CD4-positive, alpha-beta T cell (primary cell): ENCODE measurements at regions of chr12 and their contacts with region 1.

Region 1: GRCh38 chr12:121579981-121580868 is 598 bp downstream of the KDM2B start:
- DNase-seq: peak; percentile 64 to 89 (median 78)
- ATAC-seq: peak; percentile 64
- H3K4me3 ChIP-seq: peak overlapping the region; percentile 63
- H3K4me3 Mint-ChIP-seq: peak overlapping the region; percentile 98
- H3K27ac ChIP-seq: peak overlapping the region; percentile 62 to 79
- H3K27ac Mint-ChIP-seq: peak overlapping the region; percentile 98
- H3K4me1 ChIP-seq: peaks cover 52% of the 10 kb centered on the region
- H3K4me1 Mint-ChIP-seq: peaks cover 55% of the 10 kb centered on the region
- H3K27me3 ChIP-seq: no peaks in the 10 kb centered on the region
- H3K27me3 Mint-ChIP-seq: no peaks in the 10 kb centered on the region
- CTCF ChIP-seq: no peak

Region 2: GRCh38 chr12:121026274-121027045 is 553.8 kb before region 1 on chr12:
- CTCF ChIA-PET with region 1: no interaction called
- POLR2A ChIA-PET with region 1: no interaction called
- intact Hi-C with region 1: no loop called
- DNase-seq: no peak
- ATAC-seq: no peak
- H3K4me3 ChIP-seq: no peak overlapping the region
- H3K4me3 Mint-ChIP-seq: no peak overlapping the region
- H3K27ac ChIP-seq: no peak overlapping the region
- H3K27ac Mint-ChIP-seq: no peak overlapping the region
- H3K4me1 ChIP-seq: no peaks in the 10 kb centered on the region
- H3K4me1 Mint-ChIP-seq: no peaks in the 10 kb centered on the region
- H3K27me3 ChIP-seq: no peaks in the 10 kb centered on the region
- H3K27me3 Mint-ChIP-seq: no peaks in the 10 kb centered on the region
- CTCF ChIP-seq: no peak

Region 3: DNA sequence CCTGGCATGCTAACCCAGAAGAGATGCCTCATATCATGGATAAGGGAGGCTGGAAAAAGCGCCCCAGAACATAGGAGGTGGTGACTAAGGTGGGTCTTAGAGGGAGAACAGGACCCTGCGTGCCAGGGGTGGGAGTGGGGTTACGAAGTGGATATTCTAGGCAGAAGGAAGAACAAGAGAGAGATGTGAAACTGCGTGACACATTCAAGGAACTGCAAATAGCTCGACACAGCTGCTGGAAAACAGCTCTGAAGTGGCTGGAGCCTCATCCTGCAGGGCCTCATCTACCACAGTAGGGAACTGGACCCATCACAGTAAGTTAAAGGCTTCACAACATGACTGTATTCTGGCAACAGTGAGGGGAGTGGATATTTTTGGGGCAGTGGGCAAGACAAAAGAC is 119.2 kb before region 1 on chr12:
- CTCF ChIA-PET with region 1: no interaction called
- POLR2A ChIA-PET with region 1: no interaction called
- intact Hi-C with region 1: no loop called
- DNase-seq: peak in 2 of 14 experiments; percentile 41 to 44
- ATAC-seq: no peak
- H3K4me3 ChIP-seq: no peak overlapping the region
- H3K4me3 Mint-ChIP-seq: no peak overlapping the region
- H3K27ac ChIP-seq: no peak overlapping the region
- H3K27ac Mint-ChIP-seq: no peak overlapping the region
- H3K4me1 ChIP-seq: peaks cover 48% of the 10 kb centered on the region
- H3K4me1 Mint-ChIP-seq: peaks cover 43% of the 10 kb centered on the region
- H3K27me3 ChIP-seq: no peaks in the 10 kb centered on the region
- H3K27me3 Mint-ChIP-seq: no peaks in the 10 kb centered on the region
- CTCF ChIP-seq: no peak

Region 4: GRCh38 chr12:121499929-121500793 is 80.1 kb before region 1 on chr12:
- CTCF ChIA-PET with region 1: interaction called, 3 read pairs
- POLR2A ChIA-PET with region 1: no interaction called
- intact Hi-C with region 1: loop called in 1 of 2 experiments (anchors 10 kb)
- DNase-seq: peak; percentile 44 to 86 (median 72)
- ATAC-seq: peak; percentile 87
- H3K4me3 ChIP-seq: no peak overlapping the region
- H3K4me3 Mint-ChIP-seq: no peak overlapping the region
- H3K27ac ChIP-seq: no peak overlapping the region
- H3K27ac Mint-ChIP-seq: peak overlapping the region; percentile 49
- H3K4me1 ChIP-seq: peaks cover 16% of the 10 kb centered on the region
- H3K4me1 Mint-ChIP-seq: peaks cover 4% of the 10 kb centered on the region
- H3K27me3 ChIP-seq: no peaks in the 10 kb centered on the region
- H3K27me3 Mint-ChIP-seq: no peaks in the 10 kb centered on the region
- CTCF ChIP-seq: peak; percentile 94

Region 5: DNA sequence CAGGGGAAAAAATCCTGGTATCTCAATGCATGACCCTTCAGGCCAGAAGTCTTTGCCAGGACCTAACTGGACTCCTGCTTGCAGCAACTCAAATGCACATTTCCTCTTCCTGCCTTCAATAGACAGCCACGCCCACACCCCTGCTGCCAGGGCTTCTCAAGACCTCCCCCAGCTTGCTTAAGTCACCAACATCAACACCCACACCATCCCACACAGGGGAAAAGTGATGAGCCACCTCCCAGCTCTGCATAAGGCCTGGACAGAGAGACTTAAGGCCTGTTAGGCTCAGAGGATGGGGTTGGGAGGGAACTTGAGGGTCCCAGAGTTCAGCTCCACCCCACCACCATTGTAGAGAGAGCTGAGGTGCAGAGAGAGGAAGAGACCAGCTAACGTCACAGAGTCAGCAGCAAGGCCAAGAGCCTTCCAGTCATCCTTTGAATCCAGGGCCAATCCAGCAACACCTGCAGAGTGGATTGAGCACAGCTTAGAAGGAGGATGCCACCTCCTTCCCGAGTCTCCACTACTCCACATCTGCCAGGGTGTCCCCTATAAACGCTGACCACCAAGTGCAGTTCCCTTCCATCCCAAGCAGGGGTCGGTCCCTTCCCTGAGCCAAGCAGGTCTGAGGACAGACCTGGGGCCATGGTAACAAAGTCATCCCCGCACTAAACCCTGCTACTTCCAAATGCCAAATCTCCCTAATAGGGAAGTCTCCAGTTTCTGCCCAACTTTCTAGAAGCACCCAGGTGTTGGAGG is 49.4 kb before region 1 on chr12:
- CTCF ChIA-PET with region 1: no interaction called
- POLR2A ChIA-PET with region 1: interaction called, 11 read pairs
- intact Hi-C with region 1: no loop called
- DNase-seq: peak; percentile 52 to 87 (median 69)
- ATAC-seq: peak; percentile 75
- H3K4me3 ChIP-seq: no peak overlapping the region
- H3K4me3 Mint-ChIP-seq: peak overlapping the region; percentile 17
- H3K27ac ChIP-seq: peak overlapping the region; percentile 50 to 59
- H3K27ac Mint-ChIP-seq: peak overlapping the region; percentile 76
- H3K4me1 ChIP-seq: peaks cover 53% of the 10 kb centered on the region
- H3K4me1 Mint-ChIP-seq: peaks cover 52% of the 10 kb centered on the region
- H3K27me3 ChIP-seq: no peaks in the 10 kb centered on the region
- H3K27me3 Mint-ChIP-seq: no peaks in the 10 kb centered on the region
- CTCF ChIP-seq: no peak

Region 6: DNA sequence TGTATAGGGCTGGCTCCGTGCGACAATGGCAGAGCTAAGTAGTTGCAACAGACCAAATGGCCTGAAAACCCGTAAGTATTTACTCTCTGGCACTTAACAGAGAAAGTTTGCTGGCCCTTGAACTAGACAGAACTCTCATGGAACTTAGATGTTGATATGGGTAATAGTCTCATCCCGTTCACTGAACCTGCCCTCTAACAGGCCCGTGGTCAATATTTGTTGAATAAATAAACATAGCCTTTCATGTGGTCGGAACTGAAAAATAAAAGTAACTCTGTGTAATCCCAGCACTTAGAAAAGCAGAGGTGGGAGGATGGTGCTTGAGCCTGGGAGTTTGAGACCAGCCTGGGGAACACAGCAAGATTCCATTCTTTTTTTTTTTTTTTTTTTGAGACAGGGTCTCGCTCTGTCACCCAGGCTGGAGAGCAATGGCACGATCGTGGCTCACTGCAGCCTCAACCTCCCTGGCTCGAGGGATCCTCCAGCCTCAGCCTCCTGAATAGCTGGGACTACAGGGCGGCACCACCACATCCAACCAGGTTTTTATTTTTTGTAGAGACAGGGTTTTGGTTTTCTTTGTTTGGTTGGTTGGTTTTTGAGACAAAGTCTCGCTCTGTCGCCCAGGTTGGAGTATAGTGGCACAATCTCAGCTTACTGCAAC is 29.1 kb before region 1 on chr12:
- CTCF ChIA-PET with region 1: interaction called, 12 read pairs
- POLR2A ChIA-PET with region 1: interaction called, 25 read pairs
- intact Hi-C with region 1: no loop called
- DNase-seq: no peak
- ATAC-seq: no peak
- H3K4me3 ChIP-seq: no peak overlapping the region
- H3K4me3 Mint-ChIP-seq: no peak overlapping the region
- H3K27ac ChIP-seq: no peak overlapping the region
- H3K27ac Mint-ChIP-seq: no peak overlapping the region
- H3K4me1 ChIP-seq: peaks cover 5% of the 10 kb centered on the region
- H3K4me1 Mint-ChIP-seq: no peaks in the 10 kb centered on the region
- H3K27me3 ChIP-seq: no peaks in the 10 kb centered on the region
- H3K27me3 Mint-ChIP-seq: no peaks in the 10 kb centered on the region
- CTCF ChIP-seq: no peak

Region 7: GRCh38 chr12:121590476-121591143 is 10.4 kb after region 1 on chr12:
- CTCF ChIA-PET with region 1: interaction called, 5 read pairs
- POLR2A ChIA-PET with region 1: interaction called, 147 read pairs
- intact Hi-C with region 1: loop called (anchors 1 kb)
- DNase-seq: peak; percentile 50 to 91 (median 61)
- ATAC-seq: peak; percentile 70
- H3K4me3 ChIP-seq: peak overlapping the region; percentile 52
- H3K4me3 Mint-ChIP-seq: peak overlapping the region; percentile 92
- H3K27ac ChIP-seq: peak overlapping the region; percentile 86 to 94
- H3K27ac Mint-ChIP-seq: peak overlapping the region; percentile 99
- H3K4me1 ChIP-seq: peaks cover 45% of the 10 kb centered on the region
- H3K4me1 Mint-ChIP-seq: peaks cover 40% of the 10 kb centered on the region
- H3K27me3 ChIP-seq: no peaks in the 10 kb centered on the region
- H3K27me3 Mint-ChIP-seq: no peaks in the 10 kb centered on the region
- CTCF ChIP-seq: no peak

Region 8: GRCh38 chr12:121688966-121689365 is 108.7 kb after region 1 on chr12:
- CTCF ChIA-PET with region 1: no interaction called
- POLR2A ChIA-PET with region 1: interaction called, 10 read pairs
- intact Hi-C with region 1: no loop called
- DNase-seq: no peak
- ATAC-seq: no peak
- H3K4me3 ChIP-seq: no peak overlapping the region
- H3K4me3 Mint-ChIP-seq: no peak overlapping the region
- H3K27ac ChIP-seq: no peak overlapping the region
- H3K27ac Mint-ChIP-seq: no peak overlapping the region
- H3K4me1 ChIP-seq: peaks cover 14% of the 10 kb centered on the region
- H3K4me1 Mint-ChIP-seq: peaks cover 12% of the 10 kb centered on the region
- H3K27me3 ChIP-seq: no peaks in the 10 kb centered on the region
- H3K27me3 Mint-ChIP-seq: no peaks in the 10 kb centered on the region
- CTCF ChIP-seq: no peak

Region 9: DNA sequence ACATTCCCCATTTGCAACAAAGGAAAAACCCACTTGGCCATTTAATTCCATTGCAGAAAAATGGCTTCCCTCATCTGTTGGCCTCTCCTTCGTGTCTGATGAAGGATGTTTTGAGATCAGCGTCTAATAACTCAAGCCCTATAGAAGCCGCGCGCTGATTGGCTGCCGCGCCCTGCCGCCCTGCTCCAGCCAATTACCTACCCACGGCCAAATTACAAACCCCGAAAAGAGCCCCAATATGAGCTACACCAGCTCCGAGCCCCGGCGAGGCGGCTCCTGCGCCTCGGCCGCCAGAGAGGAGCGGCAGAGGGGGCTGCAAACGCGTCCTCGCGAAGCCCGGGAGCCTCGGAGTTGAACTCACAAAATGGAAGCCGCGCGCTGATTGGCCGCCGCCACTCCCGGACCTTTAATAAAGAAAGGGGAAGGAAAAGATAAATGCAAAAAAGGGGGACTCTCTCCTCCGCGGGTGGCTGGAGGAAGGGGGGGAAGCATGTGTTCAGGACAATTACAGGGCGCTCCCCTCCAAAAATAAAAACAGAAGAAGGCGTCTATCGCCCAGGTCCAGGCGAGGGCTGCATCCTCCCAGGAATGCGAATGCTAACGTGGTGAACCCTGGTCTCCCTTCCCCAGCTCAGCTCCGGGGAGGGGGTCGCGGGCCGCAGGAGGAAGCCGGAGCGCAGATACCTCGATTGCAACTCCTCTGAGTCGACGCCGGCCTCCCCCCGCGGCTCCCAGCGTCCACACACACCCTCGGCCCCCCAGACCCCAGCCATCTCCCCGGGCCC is 222.8 kb after region 1 on chr12:
- CTCF ChIA-PET with region 1: no interaction called
- POLR2A ChIA-PET with region 1: interaction called, 28 read pairs
- intact Hi-C with region 1: no loop called
- DNase-seq: peak; percentile 78 to 96 (median 85)
- ATAC-seq: peak; percentile 47
- H3K4me3 ChIP-seq: peak overlapping the region; percentile 100
- H3K4me3 Mint-ChIP-seq: peak overlapping the region; percentile 99
- H3K27ac ChIP-seq: peak overlapping the region; percentile 96 to 97
- H3K27ac Mint-ChIP-seq: peak overlapping the region; percentile 98
- H3K4me1 ChIP-seq: peaks cover 50% of the 10 kb centered on the region
- H3K4me1 Mint-ChIP-seq: peaks cover 44% of the 10 kb centered on the region
- H3K27me3 ChIP-seq: no peaks in the 10 kb centered on the region
- H3K27me3 Mint-ChIP-seq: no peaks in the 10 kb centered on the region
- CTCF ChIP-seq: no peak